Left cardiac atrium (tissue), 4 donors: ENCODE measurements at regions of chr17 and their contacts with region 1.

Region 1: GRCh38 chr17:28216528-28216927 is 102.5 kb upstream of the TMEM97 start:
- DNase-seq: no peak
- ATAC-seq: no peak

Region 2: DNA sequence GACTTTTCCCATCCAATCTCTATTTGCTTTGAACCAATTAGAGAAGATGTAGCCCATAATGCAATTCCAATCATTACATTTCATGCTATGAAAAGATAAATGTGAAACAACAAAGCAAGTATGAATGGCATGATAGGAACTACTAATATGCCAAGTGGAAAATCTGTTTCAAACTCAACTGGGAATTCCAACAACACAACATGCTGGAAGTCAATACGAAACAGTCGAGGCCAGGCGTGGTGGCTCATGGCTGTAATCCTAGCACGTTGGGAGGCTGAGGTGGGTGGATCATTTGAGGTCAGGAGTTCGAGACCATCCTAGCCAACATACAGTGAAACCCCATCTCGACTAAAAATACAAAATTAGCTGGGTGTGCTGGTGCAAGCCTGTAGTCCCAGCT is 62.9 kb after region 1 on chr17:
- intact Hi-C with region 1: loop called in 1 of 2 experiments (anchors 10 kb)
- DNase-seq: no peak
- ATAC-seq: no peak